ENCODE measurements at regions of chr1 and their contacts with region 1.

Region 1: DNA sequence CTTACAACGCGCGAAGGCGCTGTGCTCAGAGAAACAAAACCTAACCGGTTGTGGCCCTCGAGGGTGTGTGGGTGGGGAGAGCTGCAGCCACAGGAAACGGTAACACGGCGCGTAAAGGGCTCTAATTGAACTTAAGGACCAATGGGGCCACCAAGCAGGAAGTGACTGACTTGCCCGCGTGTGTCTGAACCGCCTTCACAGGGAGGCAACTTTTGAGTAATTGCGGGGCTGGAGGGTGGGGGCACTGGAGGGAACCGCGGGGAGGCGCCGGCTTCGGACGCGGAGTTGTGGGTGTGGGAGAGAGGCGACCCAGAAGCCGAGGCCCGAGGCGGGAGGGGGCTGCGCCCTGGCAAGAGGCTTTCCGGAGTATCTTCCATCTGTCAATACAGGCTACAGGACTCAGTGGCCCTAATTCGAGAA is 577 bp upstream of the PNRC2 start:
- DNase-seq: peak; percentile 91
- ATAC-seq: peak; percentile 79

Region 2: GRCh38 chr1:23743287-23744052 is 215.6 kb before region 1 on chr1 and contains the start of gene ELOA:
- intact Hi-C with region 1: no loop called
- DNase-seq: peak; percentile 92
- ATAC-seq: peak; percentile 95
- total RNA-seq, gene ELOA: 37.7 TPM

Region 3: DNA sequence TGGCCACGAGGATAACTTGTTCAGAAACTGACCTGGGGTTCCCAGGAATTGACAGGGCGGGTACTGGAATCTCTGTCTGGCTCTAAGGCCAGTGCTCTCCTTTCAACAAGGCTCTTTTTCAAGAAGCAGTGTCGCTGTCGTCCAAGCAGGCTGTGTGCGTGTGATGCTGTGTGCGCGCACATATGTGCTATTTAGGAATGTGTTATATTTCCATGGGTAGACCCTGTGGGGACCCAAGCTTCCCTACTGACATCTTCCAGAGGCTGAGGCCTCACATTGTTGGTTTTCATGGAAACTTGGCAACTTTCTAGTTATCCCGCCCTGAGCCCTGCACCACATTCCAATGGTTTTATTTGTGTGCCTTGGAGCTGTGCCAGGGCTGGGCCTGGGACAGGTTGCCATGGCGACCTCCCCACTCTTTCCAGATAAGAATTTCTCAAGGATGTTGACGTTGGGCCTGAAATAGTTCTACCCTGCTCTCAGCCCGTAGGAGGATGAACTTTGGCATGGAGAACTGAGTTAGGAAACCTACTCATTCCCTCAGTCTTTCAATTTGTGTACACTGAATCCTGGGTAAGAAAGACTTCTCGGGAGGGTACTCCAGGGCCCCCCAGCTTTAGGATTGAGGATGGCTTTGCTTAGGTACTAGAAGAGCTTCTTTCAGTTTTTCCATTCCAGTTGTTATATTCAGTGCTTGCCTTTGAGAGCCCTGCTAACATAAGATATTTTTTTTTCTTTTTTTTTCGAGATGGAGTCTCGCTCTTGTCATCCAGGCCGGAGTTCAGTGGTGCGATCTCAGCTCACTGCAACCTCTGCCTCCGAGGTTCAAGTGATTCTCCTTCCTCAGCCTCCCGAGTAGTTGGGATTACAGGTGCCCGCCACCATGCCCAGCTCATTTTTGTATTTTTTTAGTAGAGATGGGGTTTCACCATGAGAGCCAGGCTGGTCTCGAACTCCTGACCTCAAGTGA is 59.8 kb after region 1 on chr1:
- intact Hi-C with region 1: loop called (anchors 2 kb)
- DNase-seq: peak; percentile 95
- ATAC-seq: peak; percentile 94

Region 4: GRCh38 chr1:24111996-24112779 is 153.1 kb after region 1 on chr1 and contains the start of gene MYOM3:
- intact Hi-C with region 1: loop called (anchors 5 kb)
- DNase-seq: no peak
- ATAC-seq: peak; percentile 74
- total RNA-seq, gene MYOM3: 403 TPM